ENCODE measurements at regions of chr6 and their contacts with region 1.

Region 1: GRCh38 chr6:145814501-145815308 is at the start of gene FBXO30:
- DNase-seq: peak; percentile 83
- H3K4me3 Mint-ChIP-seq: peak within 1 kb of the TSS; percentile 90
- H3K27ac Mint-ChIP-seq: peak within 1 kb of the TSS; percentile 89
- H3K4me1 Mint-ChIP-seq: peaks cover 61% of the 10 kb centered on the region
- H3K27me3 Mint-ChIP-seq: no peaks in the 10 kb centered on the region
- total RNA-seq, gene FBXO30: 8.8 TPM in 2 replicates

Region 2: GRCh38 chr6:145015739-145016558 is 798.8 kb before region 1 on chr6:
- intact Hi-C with region 1: loop called (anchors 5 kb)
- DNase-seq: peak; percentile 6
- H3K4me3 Mint-ChIP-seq: peak overlapping the region; percentile 16
- H3K27ac Mint-ChIP-seq: peak overlapping the region; percentile 45
- H3K4me1 Mint-ChIP-seq: peaks cover 27% of the 10 kb centered on the region
- H3K27me3 Mint-ChIP-seq: peaks cover 2% of the 10 kb centered on the region

Region 3: DNA sequence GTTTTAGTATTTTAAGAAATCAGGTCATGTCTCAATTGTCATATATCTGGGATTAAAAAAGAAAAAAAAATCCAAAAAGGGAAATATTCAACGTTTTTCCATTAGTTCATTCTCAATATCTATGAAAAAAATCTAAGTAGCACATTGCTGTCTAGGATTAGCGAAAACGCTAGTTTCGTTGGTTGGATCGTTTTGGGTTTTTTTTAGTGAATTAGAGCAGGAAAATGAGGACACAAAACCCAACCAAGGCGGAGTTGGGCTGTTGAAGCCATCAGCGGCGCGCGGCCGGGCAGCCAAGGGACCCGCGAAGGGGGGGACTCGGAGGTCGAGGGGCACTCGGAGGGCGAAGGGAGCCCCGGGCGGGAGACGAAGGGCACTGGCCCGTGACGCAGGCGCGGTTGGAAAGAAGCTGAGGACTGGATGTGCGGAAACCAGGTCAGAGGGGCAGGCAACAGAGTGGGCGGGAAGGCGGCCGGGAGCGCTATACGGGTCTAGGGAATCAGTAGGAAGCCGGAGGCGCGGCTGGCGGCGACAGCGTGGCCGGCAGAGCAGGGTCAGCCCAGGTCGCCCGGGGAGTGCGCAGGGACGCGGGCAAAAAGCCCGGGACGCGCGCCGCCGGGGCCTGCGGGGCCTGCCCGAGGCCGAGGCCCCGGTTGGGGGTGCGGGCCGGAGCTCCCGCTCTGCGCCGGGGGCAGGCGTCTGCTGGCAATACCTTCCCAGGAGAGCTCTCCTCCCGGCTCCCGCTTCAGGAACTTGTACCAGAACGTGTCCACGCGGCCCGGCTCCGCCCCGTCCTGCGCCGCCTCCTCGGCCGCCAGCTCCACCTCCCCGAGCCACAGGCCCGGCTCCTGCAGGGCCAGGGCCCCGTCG is 80.0 kb before region 1 on chr6:
- intact Hi-C with region 1: loop called (anchors 1 kb)
- DNase-seq: peak; percentile 52
- H3K4me3 Mint-ChIP-seq: peak overlapping the region; percentile 94
- H3K27ac Mint-ChIP-seq: peak overlapping the region; percentile 96
- H3K4me1 Mint-ChIP-seq: peaks cover 26% of the 10 kb centered on the region
- H3K27me3 Mint-ChIP-seq: no peaks in the 10 kb centered on the region

Region 4: DNA sequence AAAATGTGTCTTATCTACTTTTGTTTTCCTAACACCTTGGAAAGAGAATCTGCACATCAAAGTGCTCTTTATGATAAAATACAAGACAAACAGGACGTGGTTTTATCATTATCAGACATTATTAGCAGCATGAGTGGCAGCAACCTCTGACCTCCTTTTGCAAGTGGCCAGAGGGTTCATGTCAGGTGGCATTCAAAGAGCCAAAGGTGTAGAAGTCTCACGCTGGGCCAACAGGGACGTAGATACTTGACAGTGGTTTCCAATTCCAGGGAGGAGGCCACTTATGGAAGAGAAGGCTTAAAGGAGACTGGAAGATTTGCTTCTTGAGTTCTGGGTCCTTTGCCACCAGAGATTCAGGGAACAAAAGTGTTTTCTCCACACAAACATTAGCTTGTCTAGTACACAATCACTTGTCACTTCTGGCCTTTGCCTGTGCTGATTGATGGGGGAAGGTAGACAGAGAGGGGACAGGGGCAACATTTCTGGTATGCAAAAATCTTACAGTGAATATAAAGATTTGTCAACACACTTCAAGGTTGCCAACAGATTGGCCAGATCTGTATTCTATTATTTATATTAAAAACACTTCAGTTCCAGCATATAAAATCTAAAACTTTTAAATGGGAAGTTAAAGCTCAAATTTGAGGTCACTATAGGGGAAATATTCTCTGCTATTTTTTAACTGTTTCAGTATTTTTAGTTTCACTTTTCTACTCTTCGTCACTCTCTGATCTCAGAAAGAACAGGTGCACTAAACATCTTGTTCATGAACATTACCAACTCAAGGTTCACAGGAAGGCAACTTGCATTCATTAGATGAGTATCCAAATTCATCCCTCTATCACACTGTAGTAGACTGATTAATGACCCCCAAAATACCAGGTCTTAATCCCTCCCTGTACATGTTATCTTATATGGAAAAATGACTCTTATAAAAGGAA is 52.0 kb after region 1 on chr6:
- intact Hi-C with region 1: loop called (anchors 2 kb)
- DNase-seq: no peak
- H3K4me3 Mint-ChIP-seq: peak overlapping the region; percentile 38
- H3K27ac Mint-ChIP-seq: peak overlapping the region; percentile 27
- H3K4me1 Mint-ChIP-seq: peaks cover 26% of the 10 kb centered on the region
- H3K27me3 Mint-ChIP-seq: no peaks in the 10 kb centered on the region

Region 5: DNA sequence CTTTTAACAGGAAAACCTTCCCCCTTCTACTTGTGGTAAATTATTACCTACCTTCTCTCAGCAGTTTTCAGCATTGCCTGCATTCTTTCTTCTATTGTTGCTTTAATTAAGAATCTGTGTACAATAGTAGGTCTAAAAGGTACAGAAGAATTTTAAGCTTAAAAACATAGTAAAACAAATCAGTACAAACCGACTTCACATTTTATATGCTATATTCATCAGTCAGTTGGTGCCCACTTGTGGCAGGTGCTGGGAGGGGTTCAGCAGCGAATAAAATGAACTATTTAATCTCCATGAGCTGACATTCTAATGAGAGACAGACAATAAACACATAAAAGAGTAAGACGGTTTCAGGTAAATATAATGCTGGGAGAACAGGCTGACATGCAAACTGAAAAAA is 73.3 kb after region 1 on chr6:
- intact Hi-C with region 1: loop called (anchors 5 kb)
- DNase-seq: no peak
- H3K4me3 Mint-ChIP-seq: no peak overlapping the region
- H3K27ac Mint-ChIP-seq: no peak overlapping the region
- H3K4me1 Mint-ChIP-seq: no peaks in the 10 kb centered on the region
- H3K27me3 Mint-ChIP-seq: no peaks in the 10 kb centered on the region

Region 6: GRCh38 chr6:147202516-147203312 is 1388.0 kb after region 1 on chr6:
- intact Hi-C with region 1: loop called (anchors 1 kb)
- DNase-seq: peak; percentile 77
- H3K4me3 Mint-ChIP-seq: peak overlapping the region; percentile 89
- H3K27ac Mint-ChIP-seq: peak overlapping the region; percentile 98
- H3K4me1 Mint-ChIP-seq: peaks cover 39% of the 10 kb centered on the region
- H3K27me3 Mint-ChIP-seq: no peaks in the 10 kb centered on the region

Measured in activated T-helper 1 cell treated with anti-CD3 and anti-CD28 coated beads, Interleukin-12 subunit alpha, Interleukin-12 subunit beta, Interleukin-2, Interleukin-4 antibody, amounts not matched to agents 30 ng/mL and 10 ng/mL and 1 ng/mL, durations not matched to agents 14 hours and 24 hours and 36 hours (primary cell).